Posterior vena cava (tissue), 2 donors: ENCODE measurements at regions of chr17 and their contacts with region 1.

Region 1: GRCh38 chr17:30808785-30809286 is 15.7 kb downstream of the CRLF3 start:
- DNase-seq: no peak

Region 2: DNA sequence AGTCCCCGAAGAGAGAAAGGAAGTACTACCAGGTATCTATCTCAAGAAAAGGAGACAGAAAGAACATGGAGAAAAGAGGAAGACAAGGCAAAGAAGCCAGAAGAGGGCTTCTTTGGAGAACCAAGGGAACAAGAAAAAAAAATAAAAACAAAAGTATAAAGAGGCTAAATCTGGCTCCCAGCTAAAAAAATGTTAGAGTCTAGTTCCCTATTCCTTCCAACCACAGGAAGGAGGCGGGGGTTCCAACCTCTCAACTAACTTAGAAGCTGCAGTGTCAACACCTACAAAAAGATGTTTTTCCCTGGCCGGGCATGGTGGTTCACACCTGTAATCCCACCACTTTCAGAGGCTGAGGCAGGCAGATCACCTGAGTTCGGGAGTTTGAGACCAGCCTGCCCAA is 1079.3 kb after region 1 on chr17:
- intact Hi-C with region 1: loop called in 1 of 2 experiments (anchors 5 kb)
- DNase-seq: no peak